Mammary epithelial cell (primary cell): ENCODE measurements at regions of chr1 and their contacts with region 1.

Region 1: GRCh38 chr1:9413148-9413876 is 120.6 kb downstream of the SPSB1 start:
- DNase-seq: peak; percentile 79
- H3K4me3 ChIP-seq: no peak overlapping the region
- H3K27ac ChIP-seq: peak overlapping the region; percentile 47
- H3K4me1 ChIP-seq: peaks cover 17% of the 10 kb centered on the region
- H3K27me3 ChIP-seq: no peaks in the 10 kb centered on the region
- CTCF ChIP-seq: peak in 1 of 2 donors; percentile 15

Region 2: GRCh38 chr1:9382643-9383491 is 30.4 kb before region 1 on chr1:
- CTCF ChIA-PET with region 1: interaction called, 16 read pairs
- dilution Hi-C with region 1: no loop called
- in situ Hi-C with region 1: no loop called
- intact Hi-C with region 1: no loop called
- DNase-seq: no peak
- H3K4me3 ChIP-seq: no peak overlapping the region
- H3K27ac ChIP-seq: no peak overlapping the region
- H3K4me1 ChIP-seq: no peaks in the 10 kb centered on the region
- H3K27me3 ChIP-seq: no peaks in the 10 kb centered on the region
- CTCF ChIP-seq: no peak